ENCODE measurements at regions of chr10 and their contacts with region 1.

Region 1: GRCh38 chr10:97612386-97612785 is 20.9 kb downstream of the MORN4 start:
- DNase-seq: no peak
- H3K4me3 ChIP-seq: no peak overlapping the region
- H3K27ac ChIP-seq: no peak overlapping the region
- H3K4me1 ChIP-seq: peaks cover 0 to 4% (median 0%) of the 10 kb centered on the region in 4 donors
- H3K27me3 ChIP-seq: no peaks in the 10 kb centered on the region
- CTCF ChIP-seq: peak in 2 of 4 experiments; percentile 21 to 38
- EP300 ChIP-seq: no peak
- POLR2A ChIP-seq: no peak

Region 2: GRCh38 chr10:97498076-97498840 is 114.1 kb before region 1 on chr10 and contains the start of gene MMS19:
- intact Hi-C with region 1: no loop called
- DNase-seq: peak; percentile 100
- H3K4me3 ChIP-seq: peak within 1 kb of the TSS; percentile 69 to 92 (median 83)
- H3K27ac ChIP-seq: peak within 1 kb of the TSS; percentile 89 to 96 (median 94)
- H3K4me1 ChIP-seq: peaks cover 0 to 52% (median 40%) of the 10 kb centered on the region in 4 donors
- H3K27me3 ChIP-seq: no peaks in the 10 kb centered on the region
- CTCF ChIP-seq: no peak
- EP300 ChIP-seq: peak in 1 of 4 donors; percentile 37
- POLR2A ChIP-seq: peak; percentile 56 to 65
- total RNA-seq, gene MMS19: 37.9 to 79.8 (median 57.9) TPM

Region 3: DNA sequence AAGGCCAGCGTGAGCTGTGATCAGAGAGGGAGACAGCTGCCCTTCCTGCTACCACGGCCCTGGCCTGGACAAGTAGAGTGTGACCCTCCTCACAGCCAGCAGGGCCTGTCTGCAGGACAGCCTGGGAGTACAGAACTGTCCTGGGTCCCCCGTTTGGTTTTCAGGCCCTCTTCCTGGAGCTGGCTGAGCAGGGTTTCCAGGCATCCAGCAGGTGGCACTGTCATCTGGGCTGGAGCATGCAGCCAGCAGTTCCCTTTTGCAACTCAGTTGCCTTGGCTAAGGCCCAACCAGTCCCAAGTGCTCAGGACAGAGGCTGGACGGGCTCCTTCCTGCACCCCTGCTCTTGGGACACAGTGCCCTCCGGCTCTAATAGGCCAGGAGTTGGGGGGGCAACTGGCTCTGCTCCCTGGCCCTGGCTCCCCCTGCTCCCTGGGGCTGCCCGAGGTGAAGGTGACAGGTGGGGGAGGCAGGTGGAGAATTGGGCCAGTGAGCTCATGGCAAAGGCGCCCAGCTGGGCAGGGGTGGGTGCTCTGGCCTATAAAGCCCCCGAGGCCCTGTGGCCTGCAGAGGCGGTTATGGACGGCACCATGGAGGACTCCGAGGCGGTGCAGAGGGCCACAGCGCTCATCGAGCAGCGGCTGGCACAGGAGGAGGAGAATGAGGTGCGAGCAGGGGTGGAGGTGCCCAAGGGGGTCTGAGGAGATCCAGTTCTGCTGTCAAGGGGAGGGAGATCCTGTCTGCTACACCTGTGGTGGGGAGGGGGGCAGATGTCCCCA is 40.0 kb before region 1 on chr10 and contains the start of gene ANKRD2:
- intact Hi-C with region 1: loop called (anchors 2 kb)
- DNase-seq: peak; percentile 89
- H3K4me3 ChIP-seq: no peak within 1 kb of the TSS
- H3K27ac ChIP-seq: peak within 1 kb of the TSS in 2 of 4 donors; percentile 70 to 82
- H3K4me1 ChIP-seq: peaks cover 0 to 30% (median 22%) of the 10 kb centered on the region in 4 donors
- H3K27me3 ChIP-seq: no peaks in the 10 kb centered on the region
- CTCF ChIP-seq: peak; percentile 74 to 91 (median 81)
- EP300 ChIP-seq: no peak
- POLR2A ChIP-seq: no peak
- total RNA-seq, gene ANKRD2: 0.49 TPM in 1 of 4 donors, not detected in the others

Measured in sigmoid colon (tissue), 7 donors.